ENCODE measurements at regions of chr12 and their contacts with region 1.

Region 1: GRCh38 chr12:83954939-83955601 is 957.5 kb downstream of the SLC6A15 start:
- DNase-seq: no peak
- ATAC-seq: peak; percentile 59
- H3K4me3 ChIP-seq: no peak overlapping the region
- H3K27ac ChIP-seq: no peak overlapping the region
- H3K4me1 ChIP-seq: no peaks in the 10 kb centered on the region
- H3K27me3 ChIP-seq: no peaks in the 10 kb centered on the region
- CTCF ChIP-seq: peak in 2 of 3 experiments; percentile 19 to 31; a peak in 2 of 6 replicates
- EP300 ChIP-seq: no peak
- POLR2A ChIP-seq: no peak
- RAD21 ChIP-seq: no peak

Region 2: DNA sequence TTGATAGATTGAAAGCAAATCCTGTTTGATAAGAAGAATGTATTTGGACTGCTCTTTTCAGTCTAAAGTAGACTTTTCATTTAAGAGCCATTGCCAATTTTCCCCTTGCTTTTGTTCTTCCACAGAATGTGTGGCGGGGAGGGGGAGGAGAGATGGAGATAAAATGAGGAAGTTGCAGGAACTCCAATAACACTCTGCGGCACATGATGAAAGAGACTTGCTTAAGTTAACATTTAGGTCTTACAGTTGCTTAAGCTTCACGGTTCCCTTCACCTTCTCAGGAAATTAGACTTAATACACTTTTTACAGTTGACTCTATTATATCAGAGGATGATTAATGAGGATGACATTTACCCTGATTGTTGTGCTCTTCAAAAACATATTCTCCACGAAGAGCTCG is 731.1 kb before region 1 on chr12:
- CTCF ChIA-PET with region 1: no interaction called
- POLR2A ChIA-PET with region 1: no interaction called
- RAD21 ChIA-PET with region 1: no interaction called
- SMC1A ChIA-PET with region 1: no interaction called
- in situ Hi-C with region 1: no loop called
- intact Hi-C with region 1: no loop called
- DNase-seq: no peak
- ATAC-seq: no peak
- H3K4me3 ChIP-seq: no peak overlapping the region
- H3K27ac ChIP-seq: no peak overlapping the region
- H3K4me1 ChIP-seq: no peaks in the 10 kb centered on the region
- H3K27me3 ChIP-seq: no peaks in the 10 kb centered on the region
- CTCF ChIP-seq: no peak
- EP300 ChIP-seq: no peak
- POLR2A ChIP-seq: no peak
- RAD21 ChIP-seq: no peak

Region 3: DNA sequence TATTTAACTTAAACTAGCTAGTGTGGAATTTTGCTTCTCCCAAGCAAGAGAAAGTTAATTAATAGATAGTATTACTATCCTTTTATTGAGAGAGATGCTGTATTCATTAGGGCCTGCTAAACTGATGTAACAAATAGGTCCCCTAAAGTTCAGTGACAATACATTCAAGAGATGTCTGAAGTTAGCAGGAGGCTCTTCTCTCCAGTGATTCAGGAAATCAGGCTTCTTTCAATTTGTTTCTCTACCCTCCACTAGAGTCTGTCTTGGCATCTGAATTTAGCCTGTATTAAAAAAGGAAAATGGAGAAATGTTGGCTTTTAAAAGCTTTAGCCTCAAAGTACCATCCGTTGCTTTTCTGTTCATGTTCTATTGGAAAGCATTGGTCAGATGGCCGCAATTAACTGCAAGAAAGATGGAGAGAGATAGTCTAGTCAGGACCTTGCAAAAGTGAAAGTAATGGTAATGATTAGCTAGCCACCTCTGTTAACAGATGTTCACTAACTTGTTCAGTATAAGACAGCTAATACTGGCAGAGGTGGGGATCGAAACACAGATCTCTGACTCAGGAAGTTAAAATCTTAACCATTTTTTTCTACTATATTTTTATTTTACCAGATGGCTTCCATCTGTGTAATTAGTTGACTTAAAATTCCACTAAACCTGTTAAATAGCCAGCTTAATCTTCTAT is 481.5 kb before region 1 on chr12:
- CTCF ChIA-PET with region 1: no interaction called
- POLR2A ChIA-PET with region 1: no interaction called
- RAD21 ChIA-PET with region 1: no interaction called
- SMC1A ChIA-PET with region 1: no interaction called
- in situ Hi-C with region 1: no loop called
- intact Hi-C with region 1: no loop called
- DNase-seq: peak; percentile 26
- ATAC-seq: peak; percentile 95
- H3K4me3 ChIP-seq: no peak overlapping the region
- H3K27ac ChIP-seq: no peak overlapping the region
- H3K4me1 ChIP-seq: no peaks in the 10 kb centered on the region
- H3K27me3 ChIP-seq: no peaks in the 10 kb centered on the region
- CTCF ChIP-seq: no peak
- EP300 ChIP-seq: no peak
- POLR2A ChIP-seq: no peak
- RAD21 ChIP-seq: no peak

Region 4: GRCh38 chr12:83971781-83972180 is 16.7 kb after region 1 on chr12:
- CTCF ChIA-PET with region 1: interaction called, 7 read pairs
- POLR2A ChIA-PET with region 1: no interaction called
- RAD21 ChIA-PET with region 1: interaction called, 4 read pairs
- SMC1A ChIA-PET with region 1: interaction called, 14 read pairs
- in situ Hi-C with region 1: no loop called
- intact Hi-C with region 1: no loop called
- DNase-seq: no peak
- ATAC-seq: no peak
- H3K4me3 ChIP-seq: no peak overlapping the region
- H3K27ac ChIP-seq: no peak overlapping the region
- H3K4me1 ChIP-seq: no peaks in the 10 kb centered on the region
- H3K27me3 ChIP-seq: no peaks in the 10 kb centered on the region
- CTCF ChIP-seq: no peak
- EP300 ChIP-seq: no peak
- POLR2A ChIP-seq: no peak
- RAD21 ChIP-seq: no peak

Region 5: GRCh38 chr12:84070292-84070691 is 115.2 kb after region 1 on chr12:
- CTCF ChIA-PET with region 1: no interaction called
- POLR2A ChIA-PET with region 1: no interaction called
- RAD21 ChIA-PET with region 1: no interaction called
- SMC1A ChIA-PET with region 1: no interaction called
- in situ Hi-C with region 1: no loop called
- intact Hi-C with region 1: no loop called
- DNase-seq: no peak
- ATAC-seq: no peak
- H3K4me3 ChIP-seq: no peak overlapping the region
- H3K27ac ChIP-seq: no peak overlapping the region
- H3K4me1 ChIP-seq: no peaks in the 10 kb centered on the region
- H3K27me3 ChIP-seq: no peaks in the 10 kb centered on the region
- CTCF ChIP-seq: no peak
- EP300 ChIP-seq: no peak
- POLR2A ChIP-seq: no peak
- RAD21 ChIP-seq: no peak